Vagina (tissue), 2 donors: ENCODE measurements at regions of chr6 and their contacts with region 1.

Region 1: GRCh38 chr6:103085801-103086200 is 1692.3 kb downstream of the GRIK2 start:
- DNase-seq: no peak
- H3K4me3 ChIP-seq: no peak overlapping the region
- H3K27ac ChIP-seq: no peak overlapping the region
- H3K4me1 ChIP-seq: no peaks in the 10 kb centered on the region
- H3K27me3 ChIP-seq: no peaks in the 10 kb centered on the region
- CTCF ChIP-seq: no peak
- POLR2A ChIP-seq: no peak

Region 2: DNA sequence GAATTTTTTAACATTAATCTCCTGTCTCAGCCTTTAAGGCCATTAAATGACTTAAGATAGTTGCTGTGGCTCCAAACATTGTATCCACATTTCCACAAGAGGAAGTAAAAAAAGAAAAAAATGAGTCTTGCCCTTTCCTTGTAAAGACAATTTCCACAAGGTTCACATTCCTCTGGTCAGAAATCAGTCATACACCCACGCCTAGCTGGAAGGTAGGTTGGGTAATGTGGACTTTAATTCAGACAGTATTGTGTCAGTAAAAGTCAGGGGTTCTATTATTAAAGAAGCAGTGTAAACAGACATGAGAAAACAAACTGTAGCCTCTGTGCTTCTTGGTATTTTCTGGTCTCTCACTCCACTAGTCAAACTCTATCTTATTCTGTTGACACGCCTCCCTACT is 1010.3 kb before region 1 on chr6:
- intact Hi-C with region 1: loop called (anchors 5 kb)
- DNase-seq: no peak
- H3K4me3 ChIP-seq: no peak overlapping the region
- H3K27ac ChIP-seq: no peak overlapping the region
- H3K4me1 ChIP-seq: no peaks in the 10 kb centered on the region
- H3K27me3 ChIP-seq: no peaks in the 10 kb centered on the region
- CTCF ChIP-seq: no peak
- POLR2A ChIP-seq: no peak

Region 3: GRCh38 chr6:102928109-102928508 is 157.7 kb before region 1 on chr6:
- intact Hi-C with region 1: no loop called
- DNase-seq: no peak
- H3K4me3 ChIP-seq: no peak overlapping the region
- H3K27ac ChIP-seq: no peak overlapping the region
- H3K4me1 ChIP-seq: no peaks in the 10 kb centered on the region
- H3K27me3 ChIP-seq: no peaks in the 10 kb centered on the region
- CTCF ChIP-seq: no peak
- POLR2A ChIP-seq: no peak